Endothelial cell of umbilical vein (primary cell): ENCODE measurements at regions of chr12 and their contacts with region 1.

Region 1: GRCh38 chr12:60072911-60073310 is 477.1 kb downstream of the SLC16A7 start:
- DNase-seq: peak; percentile 25
- H3K4me3 ChIP-seq: no peak overlapping the region
- H3K27ac ChIP-seq: no peak overlapping the region
- H3K4me1 ChIP-seq: peaks cover 16% of the 10 kb centered on the region
- H3K27me3 ChIP-seq: no peaks in the 10 kb centered on the region
- CTCF ChIP-seq: no peak
- POLR2A ChIP-seq: no peak

Region 2: DNA sequence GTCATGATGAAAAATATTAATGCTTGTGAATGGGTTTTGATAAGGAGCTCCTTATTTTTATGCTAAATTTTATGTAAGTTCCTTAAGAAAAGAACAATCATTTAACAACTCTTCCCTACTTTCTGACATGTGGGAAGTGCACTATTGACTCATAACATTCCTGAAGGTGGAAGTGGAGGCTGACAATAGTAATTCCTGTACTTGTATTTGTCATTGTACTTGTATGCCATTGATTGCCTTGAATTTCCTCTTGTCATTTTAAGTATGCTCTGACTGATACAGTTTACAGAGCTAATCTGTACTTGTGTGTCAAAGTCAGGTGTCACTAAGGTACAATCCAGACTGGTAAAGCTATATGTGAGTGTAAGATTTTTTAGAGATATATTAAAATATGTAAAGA is 37.1 kb before region 1 on chr12:
- CTCF ChIA-PET with region 1: no interaction called
- POLR2A ChIA-PET with region 1: no interaction called
- dilution Hi-C with region 1: no loop called
- intact Hi-C with region 1: loop called (anchors 5 kb)
- DNase-seq: peak; percentile 84
- H3K4me3 ChIP-seq: no peak overlapping the region
- H3K27ac ChIP-seq: peak overlapping the region; percentile 65
- H3K4me1 ChIP-seq: peaks cover 20% of the 10 kb centered on the region
- H3K27me3 ChIP-seq: no peaks in the 10 kb centered on the region
- CTCF ChIP-seq: no peak
- POLR2A ChIP-seq: no peak

Region 3: GRCh38 chr12:60106214-60106613 is 33.3 kb after region 1 on chr12:
- CTCF ChIA-PET with region 1: no interaction called
- POLR2A ChIA-PET with region 1: no interaction called
- dilution Hi-C with region 1: no loop called
- intact Hi-C with region 1: no loop called
- DNase-seq: peak; percentile 41
- H3K4me3 ChIP-seq: no peak overlapping the region
- H3K27ac ChIP-seq: no peak overlapping the region
- H3K4me1 ChIP-seq: no peaks in the 10 kb centered on the region
- H3K27me3 ChIP-seq: no peaks in the 10 kb centered on the region
- CTCF ChIP-seq: peak in 1 of 2 donors; percentile 12
- POLR2A ChIP-seq: no peak